OCI-LY7 (cell line): ENCODE measurements at regions of chr6 and their contacts with region 1.

Region 1: DNA sequence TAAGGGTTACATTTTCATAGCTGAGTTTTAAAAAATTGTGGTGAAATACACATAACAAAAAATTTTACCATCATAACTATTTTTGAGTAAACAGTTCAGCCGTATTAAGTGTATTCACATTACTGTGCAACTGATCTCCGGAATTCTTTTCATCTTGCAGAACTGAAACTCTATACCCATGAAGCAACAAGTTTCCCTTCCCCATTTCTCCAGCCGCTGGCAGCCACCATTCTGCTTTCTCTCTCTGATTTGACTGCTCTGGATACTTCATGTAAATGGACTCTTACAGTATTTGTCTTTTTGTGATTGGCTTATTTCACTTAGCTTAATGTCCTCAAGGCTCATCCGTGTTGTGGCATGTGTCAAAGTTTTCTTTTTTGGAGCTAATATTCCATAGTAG is 341.6 kb downstream of the QKI start:
- DNase-seq: peak; percentile 93
- H3K4me3 ChIP-seq: peak overlapping the region; percentile 55
- H3K27ac ChIP-seq: peak overlapping the region; percentile 86
- H3K4me1 ChIP-seq: peaks cover 54% of the 10 kb centered on the region
- CTCF ChIP-seq: no peak

Region 2: GRCh38 chr6:163667372-163668060 is 88.6 kb before region 1 on chr6:
- CTCF ChIA-PET with region 1: no interaction called
- POLR2A ChIA-PET with region 1: interaction called, 5 read pairs
- intact Hi-C with region 1: loop called (anchors 1 kb)
- DNase-seq: peak; percentile 94
- H3K4me3 ChIP-seq: peak overlapping the region; percentile 43
- H3K27ac ChIP-seq: peak overlapping the region; percentile 75
- H3K4me1 ChIP-seq: peaks cover 26% of the 10 kb centered on the region
- CTCF ChIP-seq: no peak

Region 3: DNA sequence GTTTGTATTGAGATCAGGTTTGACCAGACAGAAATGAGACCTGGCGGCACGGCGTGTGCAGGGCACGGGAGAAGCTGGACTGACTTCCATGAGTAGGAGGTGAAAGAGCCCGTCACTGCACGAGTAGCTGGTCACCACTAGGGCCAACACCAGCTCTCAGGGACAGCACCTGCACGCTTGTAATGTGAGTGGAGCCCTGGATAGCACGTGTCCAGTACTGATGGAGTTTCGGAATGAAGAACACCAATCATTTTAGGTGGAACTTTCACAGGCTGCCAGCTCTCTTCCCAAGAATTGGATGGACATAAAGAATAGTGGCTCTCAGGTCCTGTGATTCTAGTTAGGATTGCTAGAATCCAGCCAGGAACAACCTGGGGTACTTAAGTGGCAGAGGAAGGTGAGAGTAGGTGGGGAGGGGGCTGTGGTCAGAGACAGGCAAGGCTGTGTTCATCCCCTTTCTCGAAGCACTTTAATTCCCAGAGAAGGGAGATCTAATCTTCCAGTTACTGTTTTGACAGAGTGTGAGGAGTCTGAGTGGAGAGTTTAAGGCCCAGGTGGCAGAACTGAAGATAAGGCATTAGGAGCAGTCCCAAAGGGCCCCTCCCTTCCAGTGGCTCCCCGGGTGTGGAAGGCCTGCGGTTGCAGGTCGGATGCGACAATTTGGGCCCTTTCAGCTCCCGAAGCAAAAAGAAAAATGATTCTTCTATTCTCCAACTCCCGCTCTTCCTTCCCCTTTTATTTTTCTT is 26.8 kb before region 1 on chr6:
- CTCF ChIA-PET with region 1: no interaction called
- POLR2A ChIA-PET with region 1: interaction called, 6 read pairs
- intact Hi-C with region 1: loop called (anchors 2 kb)
- DNase-seq: no peak
- H3K4me3 ChIP-seq: no peak overlapping the region
- H3K27ac ChIP-seq: no peak overlapping the region
- H3K4me1 ChIP-seq: peaks cover 82% of the 10 kb centered on the region
- CTCF ChIP-seq: no peak

Region 4: DNA sequence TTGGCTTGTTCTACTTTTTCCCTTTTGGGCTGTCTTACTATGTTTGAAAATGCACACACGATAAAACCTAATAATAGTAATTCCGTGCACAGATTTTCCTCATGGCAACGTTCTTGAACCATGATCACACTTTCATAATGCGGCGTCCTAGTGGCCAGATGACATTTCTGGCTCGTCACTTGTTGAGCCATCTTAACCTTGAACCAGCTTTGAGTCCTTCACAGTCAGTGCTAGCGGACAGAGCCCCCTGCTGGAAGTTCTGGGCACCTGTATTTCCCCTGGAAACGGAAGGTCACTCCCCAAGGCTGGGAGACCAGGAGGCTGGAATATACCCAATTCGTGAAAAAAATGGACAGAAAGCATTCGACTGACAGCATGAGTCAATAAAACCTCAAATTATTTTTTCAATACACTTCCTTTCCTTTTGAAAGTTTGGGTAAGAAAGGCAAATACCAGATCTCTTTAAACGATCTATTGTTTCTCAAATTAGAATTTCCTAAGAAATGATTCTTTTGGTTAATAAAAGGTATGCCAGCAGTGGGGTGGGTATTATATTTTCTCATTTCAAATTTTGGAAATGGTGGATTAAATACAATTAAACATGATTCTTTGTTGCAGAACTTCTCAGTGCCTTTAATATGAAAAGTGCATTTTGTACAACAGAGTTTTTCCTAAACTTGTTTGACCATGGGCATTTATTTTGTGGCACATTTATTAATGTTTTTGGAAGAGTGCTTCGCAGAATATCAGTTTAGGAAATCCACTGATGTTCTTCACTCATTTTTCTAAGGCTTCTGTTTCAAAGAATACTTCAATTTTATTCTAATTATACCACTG is 200.7 kb after region 1 on chr6:
- CTCF ChIA-PET with region 1: no interaction called
- POLR2A ChIA-PET with region 1: interaction called, 4 read pairs
- intact Hi-C with region 1: loop called (anchors 2 kb)
- DNase-seq: peak; percentile 84
- H3K4me3 ChIP-seq: no peak overlapping the region
- H3K27ac ChIP-seq: no peak overlapping the region
- H3K4me1 ChIP-seq: no peaks in the 10 kb centered on the region
- CTCF ChIP-seq: peak; percentile 99